GM10248 (cell line): ENCODE measurements at regions of chr1 and their contacts with region 1.

Region 1: GRCh38 chr1:12161662-12162458 is 4.9 kb upstream of the TNFRSF1B start:
- DNase-seq: peak; percentile 87
- CTCF ChIP-seq: no peak

Region 2: DNA sequence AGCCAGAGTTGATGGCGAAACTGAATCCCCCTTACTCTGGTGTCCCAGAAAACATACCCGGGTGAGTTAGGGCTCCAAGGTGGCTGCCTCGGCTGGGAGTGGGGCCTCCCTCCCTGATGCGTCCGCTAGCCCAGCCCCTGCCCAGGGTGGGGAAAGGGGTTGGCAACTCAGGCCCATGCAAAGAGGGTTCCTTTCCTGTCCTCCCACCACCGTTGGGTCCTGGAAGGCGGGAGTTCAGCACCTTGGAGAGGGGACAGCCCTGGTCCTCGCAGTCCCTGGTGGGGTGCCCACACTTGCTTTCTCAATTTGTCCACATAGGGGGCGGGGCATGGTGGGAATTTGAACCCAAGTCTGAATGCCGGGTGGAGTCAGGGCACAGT is 1108.1 kb before region 1 on chr1:
- CTCF ChIA-PET with region 1: no interaction called
- POLR2A ChIA-PET with region 1: interaction called, 11 read pairs
- DNase-seq: no peak
- CTCF ChIP-seq: no peak

Region 3: DNA sequence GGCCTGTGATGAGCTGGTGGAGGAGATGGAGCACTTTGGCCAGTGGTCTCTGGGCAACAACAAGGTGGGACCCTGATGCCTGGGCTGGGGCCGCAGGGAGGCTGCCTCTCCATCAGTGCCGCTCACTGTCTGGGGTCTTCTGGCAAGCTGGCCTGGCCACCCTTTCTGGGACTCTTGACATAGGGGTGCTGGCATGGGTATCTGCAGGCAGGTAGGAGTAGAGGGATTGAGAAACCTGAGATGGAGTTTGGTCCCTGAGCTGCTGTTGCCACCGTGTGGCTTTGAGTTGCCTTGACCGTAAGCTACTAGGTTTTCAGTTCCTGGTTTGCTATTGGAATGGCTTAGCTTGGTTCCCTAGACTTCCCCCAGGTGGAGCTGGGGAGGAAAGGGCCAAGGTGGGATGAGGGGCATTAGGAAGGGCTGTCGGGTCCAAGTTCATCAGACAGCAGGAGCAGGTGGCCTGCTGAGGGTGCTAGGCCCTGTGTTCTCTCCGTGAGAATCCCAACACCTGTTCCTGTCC is 194.8 kb before region 1 on chr1:
- CTCF ChIA-PET with region 1: no interaction called
- POLR2A ChIA-PET with region 1: no interaction called
- DNase-seq: peak; percentile 75
- CTCF ChIP-seq: peak; percentile 75

Region 4: GRCh38 chr1:12067900-12068821 is 93.7 kb before region 1 on chr1:
- CTCF ChIA-PET with region 1: no interaction called
- POLR2A ChIA-PET with region 1: no interaction called
- DNase-seq: peak; percentile 68
- CTCF ChIP-seq: no peak

Region 5: DNA sequence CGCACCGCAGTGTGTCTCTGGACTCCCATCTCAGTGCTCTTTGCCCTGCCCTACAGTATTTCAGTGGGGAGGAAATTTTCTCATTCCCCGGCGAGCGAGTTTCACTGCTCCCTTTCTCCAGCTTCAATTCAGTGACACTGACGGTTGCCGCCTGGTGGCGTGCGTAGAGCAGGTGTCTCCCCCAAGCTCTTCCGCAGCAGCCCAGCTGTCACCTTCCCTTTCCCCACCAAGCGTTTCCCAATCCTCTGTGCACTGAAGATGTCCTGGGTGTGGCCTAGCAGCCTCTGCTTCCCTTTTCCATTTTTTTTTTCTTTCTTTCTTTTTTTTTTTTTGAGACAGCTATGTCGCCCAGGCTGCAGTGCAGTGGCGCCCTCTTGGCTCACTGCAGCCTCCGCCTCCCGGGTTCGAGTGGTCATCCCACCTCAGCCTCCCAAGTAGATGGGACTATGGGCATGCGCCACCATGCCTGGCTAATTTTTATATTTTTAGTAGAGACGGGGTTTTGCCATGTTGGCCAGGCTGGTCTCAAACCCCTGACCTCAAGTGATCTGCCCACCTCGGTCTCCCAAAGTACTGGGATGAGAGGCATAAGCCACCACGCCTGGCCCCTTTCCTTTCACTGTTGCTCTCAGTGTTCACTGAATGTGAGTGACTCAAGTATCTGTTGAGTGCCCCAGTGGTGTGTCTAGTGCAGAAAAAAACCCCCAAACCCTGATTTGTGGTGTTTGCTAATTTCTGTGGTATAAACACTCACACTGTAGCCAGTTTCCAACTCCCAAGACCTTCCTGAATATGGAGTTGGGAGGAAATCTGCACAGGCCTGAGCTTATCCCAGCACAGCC is 35.0 kb after region 1 on chr1:
- CTCF ChIA-PET with region 1: no interaction called
- POLR2A ChIA-PET with region 1: no interaction called
- DNase-seq: no peak
- CTCF ChIP-seq: peak; percentile 10